ENCODE measurements at regions of chr1 and their contacts with region 1.

Region 1: GRCh38 chr1:94854458-94855306 is 34.5 kb downstream of the SLC44A3 start:
- DNase-seq: peak; percentile 87 to 94 (median 92)
- H3K4me3 ChIP-seq: peak overlapping the region in 5 of 7 experiments; percentile 49 to 74 (median 64)
- H3K27ac ChIP-seq: no peak overlapping the region
- H3K4me1 ChIP-seq: peaks cover 0 to 12% (median 1%) of the 10 kb centered on the region in 4 experiments
- H3K27me3 ChIP-seq: peaks cover 0 to 17% (median 0%) of the 10 kb centered on the region in 5 experiments

Region 2: DNA sequence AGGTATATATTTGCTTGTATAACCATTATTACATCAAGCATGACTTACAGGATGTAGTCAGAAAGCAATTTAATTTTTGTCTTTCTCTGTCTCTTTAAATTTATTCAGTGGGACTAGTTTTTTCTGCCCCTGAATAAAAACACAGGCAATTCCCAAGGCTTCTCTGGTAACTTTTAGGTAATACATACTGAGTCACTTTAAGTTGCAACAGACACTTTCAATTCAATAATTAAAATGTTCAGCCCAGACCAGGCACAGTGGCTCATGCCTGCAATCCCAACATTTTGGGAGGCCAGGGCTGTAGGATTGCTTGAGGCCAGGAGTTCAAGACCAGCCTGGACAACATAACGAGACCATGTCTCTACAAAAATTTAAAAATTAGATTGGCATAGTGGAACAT is 22.2 kb before region 1 on chr1:
- CTCF ChIA-PET with region 1: interaction called, 15 read pairs
- POLR2A ChIA-PET with region 1: interaction called, 5 read pairs
- DNase-seq: no peak
- H3K4me3 ChIP-seq: no peak overlapping the region
- H3K27ac ChIP-seq: no peak overlapping the region
- H3K4me1 ChIP-seq: peaks cover 6 to 13% (median 10%) of the 10 kb centered on the region in 4 experiments
- H3K27me3 ChIP-seq: peaks cover 8 to 62% (median 35%) of the 10 kb centered on the region in 5 experiments

Region 3: DNA sequence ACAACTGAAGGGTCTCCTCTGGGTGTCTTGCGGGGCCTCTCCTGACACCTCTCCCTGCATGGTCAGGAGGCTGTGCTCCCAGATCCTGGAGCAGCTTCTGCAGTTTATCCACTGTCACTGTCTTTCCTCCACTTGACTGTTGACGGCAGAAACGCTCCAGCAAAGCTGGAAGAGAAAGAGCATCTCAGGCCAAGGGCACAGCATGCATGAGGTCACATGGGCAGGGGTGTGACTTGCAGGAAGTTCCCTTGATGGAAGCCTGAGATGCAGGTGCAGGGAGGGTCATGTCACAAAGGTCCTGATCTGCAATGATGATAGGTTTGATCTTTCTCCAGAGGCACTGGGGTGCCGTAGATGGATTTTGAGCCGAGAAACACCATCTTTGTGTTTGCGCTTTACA is 11.3 kb before region 1 on chr1:
- CTCF ChIA-PET with region 1: interaction called, 22 read pairs
- POLR2A ChIA-PET with region 1: no interaction called
- DNase-seq: no peak
- H3K4me3 ChIP-seq: no peak overlapping the region
- H3K27ac ChIP-seq: no peak overlapping the region
- H3K4me1 ChIP-seq: no peaks in the 10 kb centered on the region
- H3K27me3 ChIP-seq: peaks cover 0 to 33% (median 14%) of the 10 kb centered on the region in 5 experiments

Region 4: DNA sequence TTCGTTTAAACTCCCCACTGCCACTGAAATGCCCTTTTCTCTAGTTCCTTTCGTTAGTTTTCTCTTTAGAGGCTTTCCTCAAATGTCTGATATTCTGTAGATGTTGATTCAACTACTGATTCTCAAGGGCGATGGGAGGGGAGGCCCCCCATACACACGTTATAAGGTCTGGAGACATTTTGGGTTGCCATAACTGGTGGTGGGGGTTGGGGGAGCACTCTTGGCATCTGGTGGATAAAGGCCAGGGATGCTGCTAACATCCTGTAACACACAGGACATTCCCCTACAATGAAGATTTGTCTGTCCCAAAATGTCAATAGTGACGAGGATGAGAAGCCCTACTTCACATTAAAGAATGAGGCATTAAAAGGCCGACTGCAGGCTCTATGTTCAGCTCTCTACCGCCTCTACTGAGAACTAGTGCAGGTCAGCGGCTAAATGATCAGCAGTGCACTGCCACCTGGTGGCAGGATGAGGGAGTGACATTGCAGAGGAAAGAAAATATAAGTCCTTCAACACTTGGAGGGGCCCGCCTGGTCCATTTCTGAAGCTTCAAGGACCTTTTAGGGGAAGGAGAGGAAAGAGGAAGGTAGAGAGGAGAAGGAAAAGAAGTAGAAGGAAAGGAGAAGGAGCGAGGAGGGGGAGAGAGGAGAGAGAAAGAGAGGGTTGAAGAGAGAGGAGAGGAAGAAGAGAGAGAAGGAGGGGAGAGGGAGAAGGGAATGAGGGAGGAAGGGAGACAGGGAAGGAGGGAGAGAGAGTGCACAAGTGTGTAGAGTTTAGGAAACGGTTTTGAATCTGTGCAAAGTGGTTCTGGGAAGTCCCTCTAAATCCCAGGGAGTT is 188.7 kb after region 1 on chr1:
- CTCF ChIA-PET with region 1: interaction called, 80 read pairs
- POLR2A ChIA-PET with region 1: no interaction called
- DNase-seq: peak; percentile 84 to 92 (median 88)
- H3K4me3 ChIP-seq: no peak overlapping the region
- H3K27ac ChIP-seq: no peak overlapping the region
- H3K4me1 ChIP-seq: no peaks in the 10 kb centered on the region
- H3K27me3 ChIP-seq: no peaks in the 10 kb centered on the region